ENCODE measurements at regions of chr7 and their contacts with region 1.

Region 1: DNA sequence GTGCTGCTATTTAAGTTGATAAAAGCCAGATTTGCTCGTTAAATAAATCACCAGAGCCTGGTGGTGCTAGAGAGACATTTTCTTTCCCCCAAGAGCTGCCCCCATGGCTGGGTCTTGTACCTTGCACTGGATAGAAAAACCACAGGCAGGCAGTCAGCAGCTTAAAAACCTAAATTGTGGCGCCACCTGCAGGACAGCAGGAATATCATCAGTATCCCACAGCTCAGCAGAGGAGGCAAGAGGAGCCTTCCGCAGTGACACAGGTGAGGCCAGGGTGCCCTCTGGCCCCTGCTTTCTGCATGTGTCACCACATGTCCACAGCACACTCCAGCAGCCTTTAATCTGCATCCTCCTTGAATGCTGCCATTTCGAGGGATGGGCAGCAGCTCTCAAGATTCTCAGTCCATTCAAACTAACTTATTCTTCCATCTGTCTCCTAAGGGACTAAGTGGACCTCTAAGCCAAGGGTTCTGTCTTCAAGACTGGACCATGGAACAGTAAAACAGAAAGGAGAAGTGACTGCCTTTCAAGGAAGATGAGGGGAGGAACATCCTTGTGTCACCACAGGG is 4.5 kb upstream of the PLXNA4 start:
- DNase-seq: peak; percentile 81
- ATAC-seq: peak; percentile 82
- H3K4me3 Mint-ChIP-seq: no peak overlapping the region
- H3K27ac Mint-ChIP-seq: no peak overlapping the region
- H3K4me1 Mint-ChIP-seq: peaks cover 11% of the 10 kb centered on the region
- H3K27me3 Mint-ChIP-seq: peaks cover 57% of the 10 kb centered on the region

Region 2: DNA sequence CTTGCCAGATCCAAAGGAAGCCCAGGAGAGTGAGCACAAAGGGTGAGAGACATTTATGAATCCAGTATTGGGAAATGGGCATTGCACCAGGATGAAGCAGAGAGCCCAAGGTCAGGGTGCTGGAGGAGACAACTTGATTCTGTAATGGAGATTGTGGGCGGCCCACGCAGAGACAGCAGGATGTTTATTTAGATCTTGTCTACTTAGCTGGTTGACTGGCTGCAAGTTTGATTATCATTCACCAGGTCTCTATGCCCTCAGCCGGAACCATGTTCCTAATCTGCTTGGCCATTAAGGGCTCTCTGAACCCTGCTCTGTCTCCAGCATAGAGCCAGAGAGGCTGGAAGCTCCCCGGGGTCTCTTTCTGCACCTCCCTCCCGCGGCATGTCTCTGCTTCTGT is 193.2 kb before region 1 on chr7:
- CTCF ChIA-PET with region 1: interaction called, 216 read pairs
- DNase-seq: no peak
- ATAC-seq: no peak
- H3K4me3 Mint-ChIP-seq: no peak overlapping the region
- H3K27ac Mint-ChIP-seq: no peak overlapping the region
- H3K4me1 Mint-ChIP-seq: no peaks in the 10 kb centered on the region
- H3K27me3 Mint-ChIP-seq: peaks cover 43% of the 10 kb centered on the region

Region 3: GRCh38 chr7:132402751-132403245 is 178.0 kb before region 1 on chr7:
- CTCF ChIA-PET with region 1: interaction called, 216 read pairs
- DNase-seq: no peak
- ATAC-seq: no peak
- H3K4me3 Mint-ChIP-seq: no peak overlapping the region
- H3K27ac Mint-ChIP-seq: no peak overlapping the region
- H3K4me1 Mint-ChIP-seq: no peaks in the 10 kb centered on the region
- H3K27me3 Mint-ChIP-seq: no peaks in the 10 kb centered on the region

Region 4: GRCh38 chr7:132551886-132552285 is 28.9 kb before region 1 on chr7:
- CTCF ChIA-PET with region 1: interaction called, 10 read pairs
- DNase-seq: no peak
- ATAC-seq: no peak
- H3K4me3 Mint-ChIP-seq: no peak overlapping the region
- H3K27ac Mint-ChIP-seq: no peak overlapping the region
- H3K4me1 Mint-ChIP-seq: peaks cover 12% of the 10 kb centered on the region
- H3K27me3 Mint-ChIP-seq: peaks cover 22% of the 10 kb centered on the region

Region 5: GRCh38 chr7:132899833-132900232 is 319.0 kb after region 1 on chr7:
- CTCF ChIA-PET with region 1: no interaction called
- DNase-seq: no peak
- ATAC-seq: no peak
- H3K4me3 Mint-ChIP-seq: no peak overlapping the region
- H3K27ac Mint-ChIP-seq: no peak overlapping the region
- H3K4me1 Mint-ChIP-seq: peaks cover 6% of the 10 kb centered on the region
- H3K27me3 Mint-ChIP-seq: no peaks in the 10 kb centered on the region

Measured in activated CD8-positive, alpha-beta memory T cell treated with anti-CD3 and anti-CD28 coated beads, Interleukin-2, amount 10 ng/mL, durations not matched to agents 7 days and 5 days (primary cell).